Prostate gland (tissue), 2 donors: ENCODE measurements at regions of chr17 and their contacts with region 1.

Region 1: DNA sequence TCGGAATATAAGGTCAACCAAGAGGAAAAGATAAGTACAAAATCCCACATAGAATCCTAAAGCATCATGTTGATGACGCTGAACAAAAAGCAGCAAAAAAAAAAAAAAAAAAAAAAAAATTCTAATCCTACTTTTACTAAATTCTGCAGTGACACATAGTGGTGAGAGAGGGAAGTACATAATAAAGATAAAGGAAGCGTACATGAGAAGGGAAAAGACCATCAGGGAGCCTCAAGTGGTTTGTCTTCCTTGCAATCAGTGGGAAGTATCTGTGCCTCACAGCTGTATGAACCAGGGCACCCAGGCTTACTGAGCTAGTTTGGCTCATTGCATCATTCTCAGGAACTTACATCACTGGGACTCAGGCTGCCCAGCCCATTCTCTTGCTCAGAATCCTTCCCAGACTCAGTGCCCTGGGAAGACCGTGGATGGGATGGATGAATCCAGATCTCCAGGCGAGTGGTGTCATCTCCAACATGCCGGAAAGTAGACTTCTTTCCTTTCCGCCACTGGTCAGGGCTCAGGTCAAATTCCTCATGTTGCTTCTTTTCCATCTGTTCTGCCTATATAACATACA is 21.2 kb downstream of the SMG6 start:
- DNase-seq: no peak
- H3K4me3 ChIP-seq: no peak overlapping the region
- H3K27ac ChIP-seq: no peak overlapping the region
- H3K4me1 ChIP-seq: no peaks in the 10 kb centered on the region
- H3K27me3 ChIP-seq: no peaks in the 10 kb centered on the region
- CTCF ChIP-seq: peak in 3 of 4 experiments; percentile 57 to 63 (median 60)
- POLR2A ChIP-seq: no peak

Region 2: GRCh38 chr17:2122641-2123302 is 159.6 kb before region 1 on chr17:
- intact Hi-C with region 1: no loop called
- DNase-seq: peak; percentile 82
- H3K4me3 ChIP-seq: peak overlapping the region in 1 of 2 donors; percentile 6
- H3K27ac ChIP-seq: peak overlapping the region; percentile 68 to 75
- H3K4me1 ChIP-seq: peaks cover 13% of the 10 kb centered on the region
- H3K27me3 ChIP-seq: no peaks in the 10 kb centered on the region
- CTCF ChIP-seq: peak in 3 of 4 experiments; percentile 25 to 45 (median 43)
- POLR2A ChIP-seq: no peak

Region 3: DNA sequence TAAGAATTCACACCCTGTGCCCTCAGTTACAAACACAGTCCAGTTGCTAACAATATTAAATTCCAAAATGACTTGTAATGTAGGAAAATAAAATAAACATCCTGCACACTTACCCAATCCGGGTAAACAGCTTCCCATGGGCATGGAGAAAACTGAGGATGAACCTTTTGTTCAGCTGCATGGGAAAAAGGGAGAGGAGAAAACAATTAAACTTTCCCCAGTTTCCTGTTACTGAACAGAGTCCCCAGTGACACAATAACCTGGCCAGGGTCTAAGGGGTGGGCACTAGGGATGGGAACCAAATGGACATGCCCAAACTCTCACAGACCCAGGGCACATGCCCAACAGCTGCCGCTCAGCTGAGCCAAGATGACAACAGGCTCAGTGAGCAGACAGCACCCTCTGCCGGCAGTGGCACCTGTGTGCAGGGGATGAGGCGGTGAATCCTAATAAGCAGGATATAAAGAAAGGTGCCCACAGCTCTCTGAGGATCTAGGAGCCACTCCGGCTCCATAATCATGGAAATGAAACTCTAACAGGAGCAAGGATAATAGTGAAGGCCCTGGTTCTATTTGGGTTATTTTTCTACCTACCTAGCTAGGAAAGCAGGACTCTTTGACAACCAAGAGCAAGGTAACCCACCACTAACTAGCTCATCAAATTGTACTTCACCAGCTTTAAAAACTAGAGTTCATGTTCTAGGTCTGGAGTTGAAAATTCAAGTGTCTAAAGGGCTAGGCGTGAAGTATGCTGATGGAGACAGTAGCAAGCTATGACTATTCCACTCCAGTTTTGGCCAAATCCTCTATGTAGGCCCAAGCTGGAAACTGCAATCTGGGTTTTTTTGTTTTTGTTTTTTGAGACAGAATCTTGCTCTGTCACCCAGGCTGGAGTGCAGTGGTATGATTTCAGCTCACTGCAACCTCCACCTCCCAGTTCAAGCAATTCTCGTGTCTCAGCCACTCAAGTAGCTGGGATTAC is 37.5 kb before region 1 on chr17:
- intact Hi-C with region 1: loop called (anchors 5 kb)
- DNase-seq: peak; percentile 83
- H3K4me3 ChIP-seq: no peak overlapping the region
- H3K27ac ChIP-seq: peak overlapping the region; percentile 40 to 49
- H3K4me1 ChIP-seq: no peaks in the 10 kb centered on the region
- H3K27me3 ChIP-seq: no peaks in the 10 kb centered on the region
- CTCF ChIP-seq: peak; percentile 94 to 99 (median 98)
- POLR2A ChIP-seq: no peak